Naive thymus-derived CD4-positive, alpha-beta T cell (primary cell): ENCODE measurements at regions of chr13 and their contacts with region 1.

Region 1: DNA sequence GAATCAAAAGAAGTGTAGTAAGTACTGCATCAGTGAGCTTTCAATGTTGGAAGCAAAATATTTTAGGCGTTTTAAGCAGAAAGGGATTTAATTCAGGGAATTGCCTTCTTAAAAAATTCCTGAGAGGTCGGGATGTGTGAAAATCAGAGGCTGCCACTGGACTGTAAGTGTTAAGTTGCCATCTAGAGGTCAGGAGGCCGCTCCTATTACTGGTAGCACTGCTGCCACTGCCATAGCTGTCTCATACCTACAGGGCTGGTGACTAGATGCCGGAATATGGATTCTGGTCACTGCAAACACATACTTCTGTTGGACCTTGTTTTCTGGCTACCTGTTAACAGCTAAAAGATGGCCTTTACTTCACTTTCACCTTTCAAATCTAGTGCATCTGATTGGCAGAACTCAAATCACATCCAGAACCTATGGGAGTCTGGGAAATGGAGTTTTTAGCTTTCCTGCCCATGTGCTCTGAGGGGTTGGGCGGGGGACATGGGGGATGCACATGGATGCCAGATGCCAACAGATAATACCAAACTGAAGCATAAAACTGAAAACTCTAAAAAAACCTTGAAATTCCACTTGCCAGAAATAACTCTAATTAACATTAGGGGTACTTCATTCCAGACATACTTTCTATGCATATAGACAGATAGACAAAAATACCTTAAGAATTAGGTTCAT is 29.8 kb downstream of the DGKH start:
- DNase-seq: no peak
- ATAC-seq: no peak
- H3K4me3 ChIP-seq: no peak overlapping the region
- H3K4me3 Mint-ChIP-seq: no peak overlapping the region
- H3K27ac ChIP-seq: no peak overlapping the region
- H3K27ac Mint-ChIP-seq: no peak overlapping the region
- H3K4me1 ChIP-seq: no peaks in the 10 kb centered on the region
- H3K4me1 Mint-ChIP-seq: peaks cover 4 to 15% (median 14%) of the 10 kb centered on the region in 7 donors
- H3K27me3 ChIP-seq: no peaks in the 10 kb centered on the region
- H3K27me3 Mint-ChIP-seq: no peaks in the 10 kb centered on the region

Region 2: DNA sequence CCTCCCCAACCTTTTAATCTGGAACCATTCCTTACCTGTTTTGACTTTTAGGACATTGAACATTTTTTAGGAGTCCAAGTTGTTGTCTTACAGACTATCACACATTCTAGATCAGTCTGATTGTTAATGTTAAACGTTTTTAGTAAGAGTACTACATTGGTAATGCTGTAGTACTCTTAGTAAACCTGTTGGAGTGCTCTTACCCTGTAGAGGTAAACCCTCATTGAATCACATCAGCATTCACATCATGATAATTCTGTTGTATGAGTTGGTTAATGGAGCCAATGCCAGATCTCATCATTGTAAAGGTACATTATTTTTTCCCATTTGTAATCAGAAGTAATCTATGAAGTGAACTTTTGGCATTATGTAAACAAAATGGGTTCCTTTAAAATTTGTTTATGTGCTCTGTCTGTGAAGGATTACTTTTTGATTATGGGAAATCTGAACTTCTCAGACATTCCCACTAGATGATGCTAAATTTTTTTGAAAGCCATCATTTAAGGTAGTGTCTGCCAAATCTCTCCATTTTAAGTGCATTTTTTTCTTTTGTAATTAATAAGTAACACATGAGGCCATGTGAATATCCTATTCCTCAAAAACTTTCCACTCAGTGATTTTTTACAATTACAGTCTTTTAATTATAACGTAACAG is 172.5 kb before region 1 on chr13:
- CTCF ChIA-PET with region 1: no interaction called
- POLR2A ChIA-PET with region 1: no interaction called
- intact Hi-C with region 1: loop called in 1 of 2 experiments (anchors 1 kb)
- DNase-seq: peak in 6 of 9 donors; percentile 6 to 45 (median 26)
- ATAC-seq: peak; percentile 92
- H3K4me3 ChIP-seq: no peak overlapping the region
- H3K4me3 Mint-ChIP-seq: no peak overlapping the region
- H3K27ac ChIP-seq: no peak overlapping the region
- H3K27ac Mint-ChIP-seq: no peak overlapping the region
- H3K4me1 ChIP-seq: no peaks in the 10 kb centered on the region
- H3K4me1 Mint-ChIP-seq: peaks cover 0 to 12% (median 3%) of the 10 kb centered on the region in 7 donors
- H3K27me3 ChIP-seq: no peaks in the 10 kb centered on the region
- H3K27me3 Mint-ChIP-seq: no peaks in the 10 kb centered on the region